Head of caudate nucleus (tissue), 42 donors: ENCODE measurements at regions of chr1 and their contacts with region 1.

Region 1: GRCh38 chr1:117512743-117513321 is 93.0 kb upstream of the TENT5C start:
- DNase-seq: no peak

Region 2: DNA sequence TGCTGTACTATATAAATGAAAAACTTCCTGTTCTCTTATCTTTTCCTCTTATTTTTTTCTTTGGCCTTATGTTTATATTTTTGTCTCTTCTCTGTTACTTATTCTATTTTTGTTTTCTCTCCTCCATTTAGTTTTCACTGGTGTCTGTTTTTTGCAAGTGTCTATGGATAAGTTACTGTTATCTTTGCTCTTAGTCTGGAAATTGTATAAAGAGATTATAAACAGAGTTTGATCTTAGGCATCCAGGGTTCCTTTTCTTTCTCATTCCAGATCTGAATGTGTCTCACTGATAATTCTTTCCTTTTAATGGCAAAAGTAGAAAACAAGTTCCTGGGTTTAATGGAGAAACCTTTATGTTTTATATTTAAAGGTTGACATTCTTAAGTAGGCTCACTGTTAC is 111.1 kb before region 1 on chr1:
- intact Hi-C with region 1: no loop called
- DNase-seq: no peak

Region 3: GRCh38 chr1:117534995-117535467 is 22.2 kb after region 1 on chr1:
- intact Hi-C with region 1: no loop called
- DNase-seq: peak in 20 of 42 donors; percentile 7 to 59 (median 33)

Region 4: DNA sequence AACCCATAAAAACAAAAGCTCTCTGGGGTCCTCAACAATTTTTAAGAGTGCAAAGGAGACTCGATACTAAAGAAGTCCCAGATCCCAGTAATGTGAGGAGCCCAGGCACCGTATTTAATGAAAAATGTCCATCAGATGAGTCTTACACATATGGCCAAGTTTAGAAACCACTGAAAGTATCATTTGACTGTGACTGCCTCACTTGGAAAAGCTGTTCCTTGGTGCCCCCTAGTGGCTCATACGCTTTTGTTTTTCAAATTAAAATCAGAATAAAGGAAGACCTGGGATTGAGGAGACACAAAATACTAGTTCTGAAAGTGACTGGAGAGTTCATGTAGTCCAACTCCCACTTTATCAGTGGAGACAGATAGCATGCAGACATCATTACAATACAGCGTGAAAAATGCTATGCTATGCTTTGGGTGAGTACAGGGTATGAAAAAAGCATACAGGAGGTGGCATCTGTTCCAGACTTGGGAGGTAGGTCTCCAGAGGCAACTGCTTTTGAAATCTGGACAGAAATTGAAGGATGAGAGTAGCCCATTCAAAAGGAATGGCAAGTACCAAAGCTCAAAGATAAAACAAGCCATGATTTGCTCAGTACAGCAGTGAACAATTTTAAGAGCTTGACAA is 382.8 kb after region 1 on chr1:
- intact Hi-C with region 1: loop called (anchors 10 kb)
- DNase-seq: peak in 39 of 42 donors; percentile 8 to 86 (median 57)